ENCODE measurements at regions of chr5 and their contacts with region 1.

Region 1: GRCh38 chr5:149775785-149776184 is 45.7 kb downstream of the PPARGC1B start:
- DNase-seq: no peak

Region 2: DNA sequence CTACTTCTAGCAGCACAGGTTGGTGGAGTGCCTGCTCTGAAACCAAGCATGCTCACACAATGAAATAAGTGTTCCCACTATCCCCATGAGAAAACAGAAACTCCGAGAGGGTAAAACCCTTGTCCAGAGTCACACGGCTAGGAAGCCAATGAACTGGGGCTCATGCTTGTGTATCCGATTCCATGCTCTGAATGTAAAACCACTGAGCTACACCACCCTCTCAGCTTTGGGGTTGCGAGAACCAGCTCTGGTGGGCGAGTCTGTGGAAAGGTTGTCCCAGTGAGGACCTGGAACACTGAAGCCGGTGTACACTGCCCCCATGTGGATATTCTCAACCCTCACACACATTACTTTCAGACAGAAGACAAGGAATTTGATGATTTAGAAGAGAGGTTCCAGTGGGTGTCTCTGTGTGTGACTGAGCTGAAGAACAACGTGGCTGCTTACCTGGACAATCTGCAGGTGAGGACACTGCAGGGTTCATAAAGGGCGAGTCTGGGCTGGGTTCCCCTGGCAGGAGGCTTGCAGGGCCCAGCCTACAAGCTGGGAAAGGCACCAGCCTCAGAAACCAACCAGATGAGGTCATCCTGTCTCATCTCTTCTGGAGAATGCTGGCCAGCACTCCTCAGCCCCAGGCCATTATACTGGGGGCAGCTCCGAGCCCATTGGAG is 157.1 kb before region 1 on chr5:
- intact Hi-C with region 1: no loop called
- DNase-seq: no peak

Region 3: GRCh38 chr5:149804478-149805450 is 29.0 kb after region 1 on chr5:
- intact Hi-C with region 1: loop called (anchors 2 kb)
- DNase-seq: no peak

Region 4: GRCh38 chr5:149822301-149822700 is 46.5 kb after region 1 on chr5:
- intact Hi-C with region 1: loop called (anchors 2 kb)
- DNase-seq: no peak

Region 5: GRCh38 chr5:149834246-149834855 is 58.6 kb after region 1 on chr5:
- intact Hi-C with region 1: no loop called
- DNase-seq: no peak

Region 6: DNA sequence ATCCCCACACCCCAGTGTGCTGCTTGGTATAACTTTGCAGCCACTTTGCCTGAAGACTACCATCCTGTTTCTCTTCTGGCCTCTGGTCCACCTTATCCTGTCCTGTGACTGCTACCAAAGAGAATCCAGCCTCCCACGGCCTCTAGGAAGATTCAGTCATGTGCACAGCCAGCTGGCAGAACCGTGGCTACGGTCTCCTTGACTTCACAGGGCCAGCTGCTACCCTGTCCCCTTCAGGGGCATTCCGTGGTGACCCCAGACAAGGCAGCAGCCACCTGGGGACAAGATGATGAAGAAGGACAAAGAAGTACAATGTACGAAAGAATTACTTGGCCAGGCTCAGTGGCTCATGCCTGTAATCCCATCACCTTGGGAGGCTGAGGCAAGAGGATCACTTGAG is 70.2 kb after region 1 on chr5:
- intact Hi-C with region 1: no loop called
- DNase-seq: no peak